ENCODE measurements at regions of chr16 and their contacts with region 1.

Region 1: DNA sequence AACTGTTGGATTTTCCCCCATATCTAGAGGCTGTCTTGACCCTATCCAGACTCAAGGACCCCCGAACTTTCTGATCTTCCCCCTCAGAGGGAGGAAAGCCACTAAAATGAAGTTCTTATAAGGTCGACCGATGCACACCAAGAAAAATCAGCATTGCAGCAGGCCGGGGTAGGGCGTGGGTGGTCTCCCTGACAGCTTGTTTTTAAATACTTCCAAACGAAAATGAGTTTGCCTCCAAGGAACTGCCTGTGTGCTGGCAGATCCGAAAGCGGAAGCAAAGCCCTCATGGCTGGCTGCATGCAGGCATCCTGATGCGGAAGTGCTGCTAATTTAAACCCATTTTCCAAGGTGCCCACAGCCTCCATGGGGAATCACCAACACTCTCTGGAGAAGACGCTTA is 374.3 kb upstream of the XYLT1 start:
- DNase-seq: peak in 6 of 10 donors; percentile 26 to 91 (median 68)

Region 2: DNA sequence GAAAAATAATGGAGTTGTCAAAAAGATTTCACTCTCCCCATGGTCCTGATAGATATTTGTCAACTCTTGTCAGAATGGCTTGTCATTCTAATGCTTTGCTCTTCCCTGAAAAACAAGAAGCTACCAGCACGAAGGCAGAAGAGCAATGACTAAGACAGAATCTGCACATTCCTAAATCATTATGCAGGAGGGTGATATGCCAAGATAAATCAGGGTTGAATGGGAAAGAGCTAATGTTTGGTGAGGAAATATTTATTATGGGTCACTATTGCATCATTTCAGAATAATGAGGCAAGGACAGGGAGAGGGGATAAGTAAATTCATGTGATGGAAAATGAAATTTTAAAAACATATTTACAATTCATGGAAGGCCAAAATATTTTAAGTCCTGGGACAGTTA is 76.8 kb before region 1 on chr16:
- intact Hi-C with region 1: loop called (anchors 10 kb)
- DNase-seq: no peak

Region 3: DNA sequence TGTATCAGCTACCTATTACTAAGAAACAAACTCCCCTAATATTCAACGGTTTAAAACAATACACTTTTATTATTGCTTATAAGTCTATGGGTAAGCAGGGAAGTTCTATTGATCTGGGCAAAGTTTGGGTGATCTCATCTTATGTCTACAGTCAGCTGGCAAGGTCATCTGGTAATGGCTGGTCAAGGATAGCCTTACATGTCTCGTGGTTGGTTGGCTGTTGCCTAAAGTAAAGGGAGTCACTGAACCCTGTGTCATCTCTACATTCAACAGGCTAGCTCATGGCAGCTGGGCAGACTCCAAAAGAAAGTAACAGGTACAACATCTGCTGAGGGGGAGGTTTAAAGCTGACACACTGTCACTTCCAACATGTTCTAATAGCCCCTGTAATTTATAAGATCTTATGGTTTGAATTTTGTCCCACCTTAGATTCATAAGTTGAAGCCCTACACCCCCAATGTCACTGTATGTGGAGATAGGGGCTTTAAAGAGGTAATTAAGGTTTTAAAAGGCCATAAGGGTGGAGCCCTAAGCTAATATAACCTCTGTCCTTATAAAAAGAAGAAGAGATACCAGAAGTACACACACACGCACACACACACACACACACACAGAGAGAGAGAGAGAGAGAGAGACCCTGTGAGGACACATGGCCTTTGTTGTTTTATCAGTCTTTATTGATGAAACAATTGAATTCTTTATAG is 72.4 kb after region 1 on chr16:
- intact Hi-C with region 1: no loop called
- DNase-seq: no peak